Endothelial cell of umbilical vein (primary cell): ENCODE measurements at regions of chr1 and their contacts with region 1.

Region 1: DNA sequence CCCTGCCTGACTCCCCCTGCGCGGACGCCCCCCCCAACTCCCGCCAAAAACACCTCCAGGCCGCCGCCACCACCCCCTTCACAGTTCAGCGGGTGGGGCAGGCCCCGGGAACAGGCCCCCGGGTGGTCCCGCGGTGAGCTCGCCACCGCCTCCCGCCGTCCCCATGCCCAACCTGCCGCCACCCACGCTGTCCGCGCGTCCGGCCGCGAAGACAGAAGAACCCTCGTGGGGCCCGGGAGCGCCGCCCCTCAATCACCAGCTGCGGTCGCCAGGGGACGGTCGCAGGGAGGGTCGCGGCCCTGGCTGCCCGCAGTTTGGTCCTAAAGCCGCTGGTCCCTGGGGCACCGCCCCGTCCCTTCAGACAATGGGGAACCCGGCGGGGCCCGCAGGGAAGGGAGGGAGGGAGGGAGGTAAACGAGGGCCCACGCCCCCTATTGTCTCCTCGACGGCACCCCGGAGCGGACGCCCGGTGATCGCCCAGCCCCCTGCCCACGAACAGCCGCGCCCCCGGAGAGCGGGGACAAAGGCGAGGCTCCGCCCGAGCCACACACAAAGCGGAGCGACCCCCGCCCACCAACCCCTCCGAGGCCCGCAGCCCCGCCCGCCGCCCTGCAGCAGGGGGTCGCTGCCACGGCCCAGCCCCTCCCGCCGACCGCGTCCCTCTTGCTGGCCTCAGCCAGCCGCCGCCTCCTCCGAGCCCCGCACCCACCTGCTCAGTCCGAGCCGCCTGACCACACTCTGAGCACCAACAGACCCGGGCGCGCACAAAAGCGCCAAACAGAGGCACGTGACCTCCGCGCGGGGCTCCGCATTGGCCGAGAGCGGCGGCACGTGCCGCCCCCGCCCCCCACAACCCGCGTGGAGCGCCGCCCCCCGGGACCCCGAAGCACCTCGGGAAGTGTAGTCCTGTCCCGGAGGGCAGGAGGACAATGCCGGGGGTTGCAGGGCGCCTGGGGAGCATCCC is at the start of gene STMN1:
- DNase-seq: peak; percentile 93
- H3K4me3 ChIP-seq: peak within 1 kb of the TSS; percentile 73 to 96 (median 88)
- H3K27ac ChIP-seq: peak within 1 kb of the TSS; percentile 71
- H3K4me1 ChIP-seq: peaks cover 17% of the 10 kb centered on the region
- H3K27me3 ChIP-seq: peaks cover 3 to 4% of the 10 kb centered on the region in 2 experiments
- CTCF ChIP-seq: no peak
- POLR2A ChIP-seq: peak; percentile 98
- total RNA-seq, gene STMN1: 491 and 503 TPM in 2 replicates

Region 2: GRCh38 chr1:25922056-25922969 is 16.4 kb after region 1 on chr1:
- CTCF ChIA-PET with region 1: interaction called, 4 read pairs
- POLR2A ChIA-PET with region 1: interaction called, 3 read pairs
- dilution Hi-C with region 1: no loop called
- intact Hi-C with region 1: loop called (anchors 2 kb)
- DNase-seq: peak; percentile 34
- H3K4me3 ChIP-seq: peak overlapping the region; percentile 22 to 49 (median 31)
- H3K27ac ChIP-seq: no peak overlapping the region
- H3K4me1 ChIP-seq: peaks cover 18% of the 10 kb centered on the region
- H3K27me3 ChIP-seq: peaks cover 0 to 6% of the 10 kb centered on the region in 2 experiments
- CTCF ChIP-seq: no peak
- POLR2A ChIP-seq: no peak

Region 3: GRCh38 chr1:25997828-25998761 is 92.1 kb after region 1 on chr1 and contains the start of gene PAFAH2:
- CTCF ChIA-PET with region 1: interaction called, 404 read pairs
- POLR2A ChIA-PET with region 1: interaction called, 4 read pairs
- dilution Hi-C with region 1: no loop called
- intact Hi-C with region 1: loop called (anchors 1 kb)
- DNase-seq: peak; percentile 100
- H3K4me3 ChIP-seq: peak within 1 kb of the TSS; percentile 41 to 83 (median 68)
- H3K27ac ChIP-seq: peak within 1 kb of the TSS; percentile 57
- H3K4me1 ChIP-seq: peaks cover 16% of the 10 kb centered on the region
- H3K27me3 ChIP-seq: no peaks in the 10 kb centered on the region
- CTCF ChIP-seq: peak; percentile 96 to 99
- POLR2A ChIP-seq: peak; percentile 87
- total RNA-seq, gene PAFAH2: 5.0 and 6.9 TPM in 2 replicates

Region 4: DNA sequence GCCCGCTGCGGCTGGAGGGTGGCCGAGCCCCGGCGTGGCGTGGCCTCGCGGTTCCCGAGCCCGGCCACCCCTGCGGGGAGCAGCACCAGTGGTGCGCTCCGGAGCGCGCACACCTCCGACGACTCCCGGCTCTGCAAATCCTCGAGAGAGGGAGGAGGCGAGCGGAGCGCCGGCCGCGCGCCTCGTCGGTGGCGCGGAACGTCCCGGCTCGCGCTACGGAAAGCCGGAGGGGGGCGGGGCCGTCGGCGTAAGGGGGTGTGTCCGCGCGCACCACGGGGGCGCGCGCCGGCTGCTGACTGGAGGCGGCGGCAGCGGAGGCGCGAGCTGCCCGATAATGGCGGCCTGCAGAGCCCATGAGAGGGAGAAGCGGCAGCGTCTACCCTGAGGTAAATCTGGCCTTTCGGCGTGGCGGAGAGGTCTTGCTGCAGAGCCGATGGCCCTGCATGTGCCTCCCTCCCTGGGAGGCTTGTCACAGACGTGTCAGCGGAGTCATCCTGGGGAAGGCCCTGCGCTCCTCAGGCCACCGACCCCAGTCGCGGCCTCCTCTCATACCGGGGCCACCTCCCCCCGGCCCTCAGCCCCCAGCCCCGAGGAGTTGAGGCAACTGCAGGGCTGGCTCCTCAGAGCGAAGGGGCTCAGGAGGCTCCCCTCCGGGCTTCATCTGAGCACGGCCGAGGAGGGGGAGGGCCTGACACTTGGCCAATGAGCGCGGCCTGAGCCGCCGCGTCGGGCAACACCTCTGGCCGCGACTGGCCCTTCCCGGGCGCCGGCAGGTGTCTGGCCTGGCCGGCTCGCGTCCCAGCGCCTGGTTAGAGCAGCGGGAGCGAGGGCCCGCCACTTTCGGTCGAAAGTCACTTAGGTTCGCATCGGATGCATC is 205.8 kb after region 1 on chr1 and contains the start of gene PDIK1L:
- CTCF ChIA-PET with region 1: no interaction called
- POLR2A ChIA-PET with region 1: no interaction called
- dilution Hi-C with region 1: no loop called
- intact Hi-C with region 1: loop called (anchors 2 kb)
- DNase-seq: peak; percentile 96
- H3K4me3 ChIP-seq: peak within 1 kb of the TSS; percentile 63 to 99 (median 75)
- H3K27ac ChIP-seq: peak within 1 kb of the TSS; percentile 47
- H3K4me1 ChIP-seq: peaks cover 11% of the 10 kb centered on the region
- H3K27me3 ChIP-seq: no peaks in the 10 kb centered on the region
- CTCF ChIP-seq: no peak
- POLR2A ChIP-seq: peak; percentile 72
- total RNA-seq, gene PDIK1L: 5.6 and 8.0 TPM in 2 replicates

Region 5: GRCh38 chr1:26161415-26162219 is 255.7 kb after region 1 on chr1:
- CTCF ChIA-PET with region 1: no interaction called
- POLR2A ChIA-PET with region 1: no interaction called
- dilution Hi-C with region 1: no loop called
- intact Hi-C with region 1: loop called (anchors 10 kb)
- DNase-seq: peak; percentile 46
- H3K4me3 ChIP-seq: peak overlapping the region in 2 of 3 experiments; percentile 20 to 29
- H3K27ac ChIP-seq: no peak overlapping the region
- H3K4me1 ChIP-seq: peaks cover 34% of the 10 kb centered on the region
- H3K27me3 ChIP-seq: no peaks in the 10 kb centered on the region
- CTCF ChIP-seq: peak in 1 of 2 donors; percentile 10
- POLR2A ChIP-seq: no peak

Region 6: DNA sequence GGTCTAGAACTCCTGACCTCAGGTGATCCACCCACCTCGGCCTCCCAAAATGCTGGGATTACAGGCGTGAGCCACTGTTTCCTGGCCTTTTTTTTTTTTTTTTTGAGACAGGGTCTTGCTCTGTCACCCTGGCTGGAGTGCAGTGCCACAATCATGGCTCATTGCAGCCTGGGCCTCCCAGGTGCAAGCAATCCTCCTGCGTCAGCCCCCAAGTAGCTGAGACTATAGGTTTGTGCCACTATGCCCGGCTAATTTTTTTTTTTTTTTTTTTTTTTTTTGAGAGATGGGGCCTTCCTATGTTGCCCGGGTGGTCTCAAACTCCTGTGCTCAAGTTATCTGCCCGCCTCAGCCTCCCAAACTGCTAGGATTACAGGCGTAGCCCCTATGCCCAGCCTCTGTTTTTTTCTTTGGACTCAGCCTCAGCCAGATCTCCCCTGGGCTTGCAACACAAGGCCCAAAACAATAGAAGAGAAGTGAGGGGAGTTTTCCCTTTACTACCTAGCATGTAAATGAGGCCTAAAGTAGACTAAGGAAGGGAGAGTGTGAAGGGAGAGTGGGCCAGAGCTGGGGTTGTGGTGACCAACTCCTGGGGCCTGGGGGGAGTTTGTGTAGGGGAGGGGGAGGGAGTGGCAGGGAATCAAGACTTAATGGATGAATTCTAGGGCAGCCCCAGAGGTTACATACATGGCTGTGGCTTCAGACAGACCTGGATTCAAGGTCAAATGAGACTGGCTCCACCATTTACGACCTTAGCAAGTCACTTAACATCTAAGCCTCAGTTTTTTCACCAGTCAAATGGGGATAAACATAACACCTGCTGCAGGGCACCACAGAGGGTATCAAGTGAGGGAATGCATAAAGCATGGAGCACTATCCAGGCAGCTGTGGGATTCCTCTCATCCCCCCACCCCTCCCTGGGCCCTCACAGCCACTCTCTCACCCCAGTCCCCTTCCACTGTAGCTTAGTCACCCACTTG is 410.2 kb after region 1 on chr1:
- CTCF ChIA-PET with region 1: no interaction called
- POLR2A ChIA-PET with region 1: no interaction called
- dilution Hi-C with region 1: no loop called
- intact Hi-C with region 1: no loop called
- DNase-seq: no peak
- H3K4me3 ChIP-seq: no peak overlapping the region
- H3K27ac ChIP-seq: no peak overlapping the region
- H3K4me1 ChIP-seq: no peaks in the 10 kb centered on the region
- H3K27me3 ChIP-seq: peaks cover 2 to 7% of the 10 kb centered on the region in 2 experiments
- CTCF ChIP-seq: no peak
- POLR2A ChIP-seq: no peak